ENCODE measurements at regions of chr10 and their contacts with region 1.

Region 1: GRCh38 chr10:79286318-79286951 is 60.8 kb upstream of the PPIF start:
- DNase-seq: peak; percentile 89
- H3K4me3 Mint-ChIP-seq: peak overlapping the region; percentile 61
- H3K27ac Mint-ChIP-seq: peak overlapping the region; percentile 98
- H3K4me1 Mint-ChIP-seq: peaks cover 67% of the 10 kb centered on the region
- H3K27me3 Mint-ChIP-seq: no peaks in the 10 kb centered on the region

Region 2: GRCh38 chr10:79242620-79243152 is 43.7 kb before region 1 on chr10:
- CTCF ChIA-PET with region 1: interaction called, 4 read pairs
- POLR2A ChIA-PET with region 1: interaction called, 50 read pairs
- DNase-seq: peak; percentile 74
- H3K4me3 Mint-ChIP-seq: peak overlapping the region; percentile 77
- H3K27ac Mint-ChIP-seq: peak overlapping the region; percentile 79
- H3K4me1 Mint-ChIP-seq: peaks cover 74% of the 10 kb centered on the region
- H3K27me3 Mint-ChIP-seq: no peaks in the 10 kb centered on the region

Region 3: DNA sequence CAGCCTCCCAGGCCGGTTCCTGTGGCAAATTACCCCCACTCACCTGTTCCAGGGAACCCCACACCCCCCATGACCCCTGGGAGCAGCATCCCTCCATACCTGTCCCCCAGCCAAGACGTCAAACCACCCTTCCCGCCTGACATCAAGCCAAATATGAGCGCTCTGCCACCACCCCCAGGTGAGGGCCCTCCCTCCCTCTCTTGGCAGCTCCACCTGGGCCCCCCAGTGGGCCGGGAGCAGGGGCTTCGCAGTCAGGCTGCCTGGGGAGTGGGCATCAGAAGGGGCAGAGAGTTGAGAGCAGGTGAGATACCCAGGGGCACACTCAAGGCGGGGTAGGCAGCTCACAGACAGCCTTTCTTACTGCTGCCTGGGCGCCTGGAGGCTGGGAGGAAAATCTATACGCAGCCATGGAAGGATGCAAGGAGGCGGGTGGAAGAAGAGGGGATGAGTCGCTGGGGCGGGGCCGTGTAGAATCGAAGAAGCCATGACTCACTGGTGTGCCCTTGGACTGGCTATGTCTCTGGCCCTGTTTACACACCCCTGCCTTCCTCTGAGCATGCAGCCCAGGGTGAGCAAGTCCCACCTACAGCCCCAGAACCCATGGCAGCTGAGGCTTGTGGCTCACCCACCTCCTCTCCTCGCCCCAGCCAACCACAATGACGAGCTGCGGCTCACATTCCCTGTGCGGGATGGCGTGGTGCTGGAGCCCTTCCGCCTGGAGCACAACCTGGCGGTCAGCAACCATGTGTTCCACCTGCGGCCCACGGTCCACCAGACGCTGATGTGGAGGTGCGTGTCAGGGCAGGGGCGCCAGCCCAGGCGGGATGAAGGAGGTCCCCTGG is 12.2 kb after region 1 on chr10:
- CTCF ChIA-PET with region 1: interaction called, 7 read pairs
- POLR2A ChIA-PET with region 1: interaction called, 12 read pairs
- DNase-seq: peak; percentile 65
- H3K4me3 Mint-ChIP-seq: no peak overlapping the region
- H3K27ac Mint-ChIP-seq: peak overlapping the region; percentile 68
- H3K4me1 Mint-ChIP-seq: peaks cover 47% of the 10 kb centered on the region
- H3K27me3 Mint-ChIP-seq: no peaks in the 10 kb centered on the region

Region 4: GRCh38 chr10:79322616-79323543 is 36.4 kb after region 1 on chr10:
- CTCF ChIA-PET with region 1: interaction called, 9 read pairs
- POLR2A ChIA-PET with region 1: interaction called, 18 read pairs
- DNase-seq: peak; percentile 84
- H3K4me3 Mint-ChIP-seq: peak overlapping the region; percentile 46
- H3K27ac Mint-ChIP-seq: peak overlapping the region; percentile 97
- H3K4me1 Mint-ChIP-seq: peaks cover 72% of the 10 kb centered on the region
- H3K27me3 Mint-ChIP-seq: no peaks in the 10 kb centered on the region

Region 5: DNA sequence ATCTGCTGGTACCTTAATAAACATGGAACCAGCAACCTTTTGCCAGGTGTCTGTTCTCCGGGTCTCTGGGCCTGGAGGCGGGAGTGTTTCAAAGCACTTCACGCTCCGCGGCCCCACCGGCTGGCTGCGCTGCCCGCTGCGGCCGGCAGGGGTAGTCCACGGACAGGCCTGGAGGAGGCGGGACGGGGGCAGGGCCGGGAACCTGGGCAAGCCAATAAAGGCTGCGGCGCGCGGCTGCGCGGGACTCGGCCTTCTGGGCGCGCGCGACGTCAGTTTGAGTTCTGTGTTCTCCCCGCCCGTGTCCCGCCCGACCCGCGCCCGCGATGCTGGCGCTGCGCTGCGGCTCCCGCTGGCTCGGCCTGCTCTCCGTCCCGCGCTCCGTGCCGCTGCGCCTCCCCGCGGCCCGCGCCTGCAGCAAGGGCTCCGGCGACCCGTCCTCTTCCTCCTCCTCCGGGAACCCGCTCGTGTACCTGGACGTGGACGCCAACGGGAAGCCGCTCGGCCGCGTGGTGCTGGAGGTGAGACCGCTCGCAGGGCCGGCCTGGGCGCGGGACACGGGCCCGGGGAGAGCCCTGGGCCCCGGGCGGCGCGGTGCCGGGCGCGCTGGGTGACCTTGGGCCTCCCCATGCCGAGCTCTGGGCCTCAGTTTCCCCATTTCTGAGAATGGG is 60.9 kb after region 1 on chr10 and contains the start of gene PPIF:
- CTCF ChIA-PET with region 1: interaction called, 8 read pairs
- POLR2A ChIA-PET with region 1: interaction called, 31 read pairs
- DNase-seq: peak; percentile 95
- H3K4me3 Mint-ChIP-seq: peak within 1 kb of the TSS; percentile 87
- H3K27ac Mint-ChIP-seq: peak within 1 kb of the TSS; percentile 88
- H3K4me1 Mint-ChIP-seq: peaks cover 76% of the 10 kb centered on the region
- H3K27me3 Mint-ChIP-seq: no peaks in the 10 kb centered on the region
- total RNA-seq, gene PPIF: 80.7 to 88.4 TPM